Prostate gland (tissue), 2 donors: ENCODE measurements at regions of chr2 and their contacts with region 1.

Region 1: DNA sequence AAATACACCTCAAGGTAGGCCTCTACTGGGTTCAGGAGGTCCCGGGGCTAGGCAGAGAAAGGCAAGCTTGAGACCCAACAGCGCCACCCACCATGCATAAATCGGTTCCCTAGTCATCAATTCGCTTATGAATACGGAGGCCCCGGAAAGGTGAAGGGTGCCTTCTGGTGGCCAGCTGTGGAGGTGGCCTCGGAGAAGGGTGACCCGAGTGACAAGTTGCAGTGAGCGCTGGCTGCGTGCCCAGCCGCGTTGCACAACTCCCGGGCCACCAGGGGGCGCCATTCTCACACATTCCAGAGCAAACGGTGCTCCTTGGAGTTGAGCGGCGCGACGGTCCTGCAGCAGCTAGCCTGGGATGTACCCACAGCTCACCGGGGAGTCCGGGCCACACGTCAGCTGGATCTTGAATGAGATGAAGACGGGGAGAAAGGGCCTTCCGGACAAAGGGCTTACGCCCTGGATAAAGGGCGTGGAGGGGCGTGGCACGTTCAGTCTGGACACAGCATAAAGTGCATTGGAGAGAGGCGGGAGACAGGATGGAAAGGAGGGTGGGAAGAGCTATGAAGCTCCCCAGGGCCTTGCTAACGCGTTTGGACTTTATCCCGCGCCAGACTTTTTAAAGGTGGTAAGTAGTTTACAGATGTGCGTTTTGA is 20.4 kb downstream of the TMSB10 start:
- DNase-seq: peak; percentile 93
- H3K4me3 ChIP-seq: no peak overlapping the region
- H3K27ac ChIP-seq: no peak overlapping the region
- H3K4me1 ChIP-seq: peaks cover 4% of the 10 kb centered on the region
- H3K27me3 ChIP-seq: no peaks in the 10 kb centered on the region
- CTCF ChIP-seq: peak; percentile 85 to 98 (median 94)
- POLR2A ChIP-seq: peak; percentile 20

Region 2: GRCh38 chr2:85011747-85012146 is 85.9 kb after region 1 on chr2:
- intact Hi-C with region 1: loop called (anchors 5 kb)
- DNase-seq: no peak
- H3K4me3 ChIP-seq: no peak overlapping the region
- H3K27ac ChIP-seq: no peak overlapping the region
- H3K4me1 ChIP-seq: no peaks in the 10 kb centered on the region
- H3K27me3 ChIP-seq: no peaks in the 10 kb centered on the region
- CTCF ChIP-seq: no peak
- POLR2A ChIP-seq: no peak

Region 3: GRCh38 chr2:85273738-85274731 is 348.2 kb after region 1 on chr2:
- intact Hi-C with region 1: loop called (anchors 10 kb)
- DNase-seq: no peak
- H3K4me3 ChIP-seq: no peak overlapping the region
- H3K27ac ChIP-seq: no peak overlapping the region
- H3K4me1 ChIP-seq: peaks cover 5% of the 10 kb centered on the region
- H3K27me3 ChIP-seq: no peaks in the 10 kb centered on the region
- CTCF ChIP-seq: no peak
- POLR2A ChIP-seq: no peak